Right cardiac atrium (tissue), 5 donors: ENCODE measurements at regions of chr6 and their contacts with region 1.

Region 1: DNA sequence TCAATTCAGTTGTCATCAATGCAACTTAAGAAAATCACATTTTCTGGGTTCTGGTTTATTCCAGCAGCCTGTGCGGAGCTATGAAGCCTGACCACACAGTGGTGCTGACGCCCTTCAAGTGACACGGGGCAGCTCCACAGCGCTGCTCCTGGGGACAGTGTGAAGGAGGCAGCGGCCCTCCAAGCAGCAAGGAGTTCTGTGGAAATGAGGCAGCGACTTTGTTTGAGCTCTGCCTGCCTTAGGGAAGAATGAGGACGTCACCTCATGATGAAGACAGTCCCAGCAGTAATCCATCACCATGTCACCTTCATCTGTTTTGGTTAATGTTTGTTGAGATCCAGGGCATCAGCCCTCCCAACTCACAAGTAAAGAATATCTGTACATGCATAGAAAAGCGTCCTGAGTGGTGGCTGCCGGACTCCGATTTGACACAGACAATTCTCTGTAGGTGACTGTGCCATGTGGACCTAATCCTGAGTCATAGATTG is 168.5 kb upstream of the UST start:
- DNase-seq: peak; percentile 82 to 93 (median 90)
- ATAC-seq: peak; percentile 99
- H3K4me3 ChIP-seq: no peak overlapping the region
- H3K27ac ChIP-seq: no peak overlapping the region
- H3K4me1 ChIP-seq: no peaks in the 10 kb centered on the region
- H3K27me3 ChIP-seq: no peaks in the 10 kb centered on the region

Region 2: DNA sequence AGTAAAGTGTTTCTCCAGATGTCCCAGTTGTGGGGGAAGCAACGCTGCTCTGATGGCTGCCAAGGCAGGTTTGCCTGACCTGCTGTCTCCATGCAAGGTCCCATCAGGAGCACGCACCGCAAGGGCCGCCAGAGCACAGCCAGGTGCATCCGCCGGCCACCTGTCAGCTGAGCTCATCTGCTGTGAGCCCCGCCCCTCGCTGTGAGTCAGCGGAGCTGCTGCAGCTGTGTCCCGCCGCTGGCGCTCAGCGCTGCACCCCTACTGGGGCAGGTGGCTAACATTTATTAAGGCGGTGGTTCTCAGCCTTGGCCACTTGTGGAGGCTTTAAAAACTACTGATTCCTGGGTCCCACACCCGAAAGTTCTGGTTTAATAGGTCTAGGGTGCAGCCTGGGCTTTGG is 394.2 kb after region 1 on chr6:
- intact Hi-C with region 1: loop called in 1 of 4 experiments (anchors 10 kb)
- DNase-seq: peak in 2 of 3 donors; percentile 41 to 63
- ATAC-seq: no peak
- H3K4me3 ChIP-seq: no peak overlapping the region
- H3K27ac ChIP-seq: no peak overlapping the region
- H3K4me1 ChIP-seq: no peaks in the 10 kb centered on the region
- H3K27me3 ChIP-seq: no peaks in the 10 kb centered on the region